ENCODE measurements at regions of chr5 and their contacts with region 1.

Region 1: DNA sequence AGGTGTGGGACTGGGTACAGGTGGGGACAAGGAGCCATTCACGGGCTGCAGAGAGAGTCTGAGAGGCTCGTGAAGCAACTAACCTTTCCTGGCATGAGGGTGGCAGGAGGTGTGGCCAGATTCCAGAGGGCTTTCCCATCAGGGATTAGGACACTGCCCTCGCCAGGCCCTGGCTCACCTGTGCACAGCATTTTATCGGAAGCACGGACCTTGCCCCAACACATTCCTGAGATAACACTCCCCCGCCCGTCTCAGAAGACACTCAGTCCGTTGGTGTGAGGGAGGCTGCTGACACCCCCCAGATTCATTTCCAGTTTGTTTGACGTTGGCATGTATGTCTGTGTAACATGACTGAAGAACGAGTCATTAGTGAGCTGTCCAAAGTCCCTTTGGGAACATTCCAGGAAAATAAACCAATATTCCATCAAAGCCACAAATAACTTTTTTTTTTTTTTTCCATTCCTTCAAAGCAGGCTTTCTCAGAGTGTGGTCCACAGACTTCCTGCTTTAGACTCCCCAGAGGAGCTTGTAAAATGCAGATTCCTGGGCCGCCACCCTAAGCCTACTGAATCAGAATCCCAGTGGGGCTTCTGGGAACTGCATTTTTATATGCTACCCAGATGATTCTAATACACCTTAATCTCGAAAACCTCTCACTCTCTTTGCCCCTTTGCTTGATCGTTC is 23.4 kb downstream of the WWC1 start:
- DNase-seq: peak; percentile 99
- ATAC-seq: peak; percentile 71
- H3K4me3 ChIP-seq: no peak overlapping the region
- H3K27ac ChIP-seq: peak overlapping the region; percentile 75
- H3K4me1 ChIP-seq: peaks cover 29% of the 10 kb centered on the region
- H3K27me3 ChIP-seq: no peaks in the 10 kb centered on the region
- CTCF ChIP-seq: peak; percentile 6; the same call in 1 of the 2 replicates
- POLR2A ChIP-seq: no peak
- RAD21 ChIP-seq: peak; percentile 4; the same call in 1 of the 2 replicates

Region 2: GRCh38 chr5:168365581-168366081 is 50.8 kb after region 1 on chr5:
- CTCF ChIA-PET with region 1: no interaction called
- POLR2A ChIA-PET with region 1: no interaction called
- dilution Hi-C with region 1: no loop called
- in situ Hi-C with region 1: no loop called
- intact Hi-C with region 1: loop called (anchors 2 kb)
- DNase-seq: peak; percentile 58
- ATAC-seq: peak; percentile 50
- H3K4me3 ChIP-seq: no peak overlapping the region
- H3K27ac ChIP-seq: peak overlapping the region; percentile 58
- H3K4me1 ChIP-seq: peaks cover 19% of the 10 kb centered on the region
- H3K27me3 ChIP-seq: no peaks in the 10 kb centered on the region
- CTCF ChIP-seq: 0 out of 2 replicates have a peak, but pooled peaks have one; percentile 14
- POLR2A ChIP-seq: no peak
- RAD21 ChIP-seq: no peak

Region 3: DNA sequence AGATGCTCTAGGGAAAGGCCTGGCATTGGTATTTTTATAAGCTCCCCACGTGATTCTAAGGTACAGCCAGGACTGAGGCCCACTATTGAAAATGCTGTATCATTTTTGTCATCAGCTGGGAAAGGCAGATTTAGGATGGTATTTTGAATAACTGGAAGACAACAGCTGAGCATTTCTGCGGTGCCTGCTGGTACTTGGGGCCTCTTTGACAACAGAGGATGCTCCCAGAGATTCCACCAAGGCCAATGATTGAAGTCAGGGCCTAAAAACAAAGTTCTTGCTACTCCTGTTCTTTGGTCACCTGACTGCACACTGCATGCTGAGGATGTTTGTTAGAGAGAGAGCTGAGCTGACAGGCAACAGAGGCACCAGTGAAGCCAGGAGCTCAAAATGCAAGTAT is 222.3 kb after region 1 on chr5:
- CTCF ChIA-PET with region 1: no interaction called
- POLR2A ChIA-PET with region 1: no interaction called
- dilution Hi-C with region 1: no loop called
- in situ Hi-C with region 1: no loop called
- intact Hi-C with region 1: no loop called
- DNase-seq: no peak
- ATAC-seq: no peak
- H3K4me3 ChIP-seq: no peak overlapping the region
- H3K27ac ChIP-seq: no peak overlapping the region
- H3K4me1 ChIP-seq: no peaks in the 10 kb centered on the region
- H3K27me3 ChIP-seq: peaks cover 4% of the 10 kb centered on the region; the same call in 1 of the 2 replicates
- CTCF ChIP-seq: no peak
- POLR2A ChIP-seq: no peak
- RAD21 ChIP-seq: no peak